WTC11 (cell line): ENCODE measurements at regions of chr1 and their contacts with region 1.

Region 1: DNA sequence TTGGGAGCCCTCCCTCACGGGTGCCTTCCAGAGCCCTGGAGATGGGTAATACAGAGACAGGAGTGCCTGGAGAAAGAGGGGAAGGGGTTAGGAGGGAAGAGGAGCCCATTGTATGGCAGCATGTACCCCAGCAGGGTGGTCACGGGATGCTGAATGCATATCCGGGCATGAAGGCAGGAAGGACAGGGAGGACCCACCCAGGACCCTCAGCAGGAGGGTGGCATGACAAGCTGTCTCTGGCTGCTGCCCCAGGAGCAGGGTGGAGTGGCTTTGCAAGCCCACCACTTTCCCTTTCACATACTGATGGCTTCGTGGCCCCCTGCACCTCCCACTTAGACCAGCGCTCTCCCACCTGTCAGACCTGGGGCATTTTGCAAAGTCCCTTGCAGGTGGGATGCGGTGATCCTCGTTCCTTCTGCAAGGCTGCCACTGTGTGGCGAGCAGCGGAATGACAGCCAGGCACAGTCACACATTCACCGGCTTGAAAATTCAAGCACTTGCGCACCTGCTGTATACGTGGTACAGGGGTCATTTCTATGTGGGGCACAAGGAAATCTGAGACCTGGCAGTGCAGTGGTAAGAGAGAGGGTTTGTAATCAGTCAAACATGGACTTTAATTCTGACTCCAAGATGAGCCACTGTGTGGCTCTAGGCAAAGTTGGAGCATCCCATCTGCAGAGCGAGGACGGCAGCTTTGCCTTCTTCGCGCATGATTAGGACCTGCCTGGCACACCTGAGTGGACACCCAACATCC is 53.2 kb upstream of the TMEM51 start:
- DNase-seq: peak; percentile 84
- ATAC-seq: peak; percentile 89
- H3K4me3 Mint-ChIP-seq: no peak overlapping the region
- H3K27ac Mint-ChIP-seq: no peak overlapping the region
- H3K4me1 Mint-ChIP-seq: peaks cover 28% of the 10 kb centered on the region
- H3K27me3 Mint-ChIP-seq: peaks cover 25% of the 10 kb centered on the region
- CTCF ChIP-seq: peak; percentile 92

Region 2: DNA sequence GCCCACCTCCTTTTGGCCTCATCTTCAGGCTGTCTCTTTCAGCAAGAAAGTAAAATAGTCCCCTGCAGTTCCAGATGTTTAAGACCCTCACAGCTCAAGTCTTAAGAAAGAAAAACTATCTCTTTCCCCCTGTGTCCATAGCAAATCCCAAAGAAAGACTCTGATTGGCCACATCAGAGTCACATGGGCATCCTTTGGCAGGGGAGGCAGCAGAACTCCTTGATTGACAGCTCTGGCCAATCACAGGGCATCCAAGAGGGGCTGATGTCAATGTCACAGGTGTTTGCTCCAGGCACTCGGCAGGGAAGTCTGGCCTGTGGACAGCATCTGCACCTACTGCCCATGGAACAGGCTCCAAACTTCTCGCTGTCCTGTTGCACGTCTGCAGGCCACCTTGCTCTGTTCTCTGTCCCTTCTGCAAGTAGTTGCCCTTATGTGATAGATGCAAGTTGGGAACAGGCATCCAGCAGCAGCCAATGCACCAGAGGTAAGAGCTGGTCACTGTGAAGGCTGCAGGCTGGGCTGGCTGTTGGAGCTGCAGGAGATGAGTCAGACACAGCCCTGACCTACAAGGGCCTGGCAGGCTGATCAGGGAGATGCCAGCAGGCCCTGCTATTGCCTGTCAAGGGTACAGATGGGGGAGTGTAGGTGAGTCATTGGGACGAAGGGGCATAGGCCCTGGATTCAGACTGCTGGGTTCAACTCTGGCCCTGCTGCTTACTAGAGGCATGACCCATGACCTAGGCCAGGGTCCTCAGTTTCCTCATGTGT is 43.6 kb before region 1 on chr1:
- CTCF ChIA-PET with region 1: interaction called, 18 read pairs
- POLR2A ChIA-PET with region 1: no interaction called
- DNase-seq: no peak
- ATAC-seq: no peak
- H3K4me3 Mint-ChIP-seq: no peak overlapping the region
- H3K27ac Mint-ChIP-seq: no peak overlapping the region
- H3K4me1 Mint-ChIP-seq: peaks cover 22% of the 10 kb centered on the region
- H3K27me3 Mint-ChIP-seq: no peaks in the 10 kb centered on the region
- CTCF ChIP-seq: no peak

Region 3: GRCh38 chr1:15062479-15063099 is 37.7 kb before region 1 on chr1:
- CTCF ChIA-PET with region 1: interaction called, 17 read pairs
- POLR2A ChIA-PET with region 1: no interaction called
- DNase-seq: no peak
- ATAC-seq: peak; percentile 65
- H3K4me3 Mint-ChIP-seq: no peak overlapping the region
- H3K27ac Mint-ChIP-seq: no peak overlapping the region
- H3K4me1 Mint-ChIP-seq: peaks cover 4% of the 10 kb centered on the region
- H3K27me3 Mint-ChIP-seq: no peaks in the 10 kb centered on the region
- CTCF ChIP-seq: peak; percentile 84